Gastrocnemius medialis (tissue), 4 donors: ENCODE measurements at regions of chr16 and their contacts with region 1.

Region 1: DNA sequence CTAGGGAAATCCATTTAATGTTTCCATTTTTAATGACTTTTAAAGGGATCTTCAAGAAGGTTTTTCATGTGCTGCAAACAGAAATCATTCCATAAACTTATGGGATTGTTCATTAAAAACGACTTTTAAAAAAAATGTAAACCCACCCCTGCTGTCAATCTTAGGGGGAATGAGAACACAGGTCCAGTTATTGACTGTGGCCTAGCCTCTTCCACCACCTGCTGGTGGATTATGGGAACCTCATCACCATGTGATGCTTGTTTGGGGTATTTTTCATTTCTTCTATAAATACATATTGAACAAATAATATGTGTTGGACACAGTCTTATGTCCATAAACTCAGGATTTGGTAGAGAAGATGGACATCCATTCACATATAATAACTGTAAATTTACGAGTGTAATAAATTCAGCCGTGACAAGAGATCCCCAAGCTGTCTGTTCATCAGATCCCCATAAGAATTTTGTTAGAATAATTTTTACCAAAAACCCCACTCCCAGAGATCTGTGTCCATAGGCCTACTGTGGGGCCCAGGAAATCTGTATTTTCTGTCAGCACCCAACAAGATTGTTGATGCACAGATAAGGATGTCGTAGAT is 42.0 kb upstream of the TMC5 start:
- DNase-seq: no peak
- ATAC-seq: peak; percentile 51 to 56
- H3K4me3 ChIP-seq: no peak overlapping the region
- H3K27ac ChIP-seq: no peak overlapping the region
- H3K4me1 ChIP-seq: no peaks in the 10 kb centered on the region
- H3K27me3 ChIP-seq: no peaks in the 10 kb centered on the region
- CTCF ChIP-seq: peak; percentile 67 to 81 (median 76)
- POLR2A ChIP-seq: no peak

Region 2: DNA sequence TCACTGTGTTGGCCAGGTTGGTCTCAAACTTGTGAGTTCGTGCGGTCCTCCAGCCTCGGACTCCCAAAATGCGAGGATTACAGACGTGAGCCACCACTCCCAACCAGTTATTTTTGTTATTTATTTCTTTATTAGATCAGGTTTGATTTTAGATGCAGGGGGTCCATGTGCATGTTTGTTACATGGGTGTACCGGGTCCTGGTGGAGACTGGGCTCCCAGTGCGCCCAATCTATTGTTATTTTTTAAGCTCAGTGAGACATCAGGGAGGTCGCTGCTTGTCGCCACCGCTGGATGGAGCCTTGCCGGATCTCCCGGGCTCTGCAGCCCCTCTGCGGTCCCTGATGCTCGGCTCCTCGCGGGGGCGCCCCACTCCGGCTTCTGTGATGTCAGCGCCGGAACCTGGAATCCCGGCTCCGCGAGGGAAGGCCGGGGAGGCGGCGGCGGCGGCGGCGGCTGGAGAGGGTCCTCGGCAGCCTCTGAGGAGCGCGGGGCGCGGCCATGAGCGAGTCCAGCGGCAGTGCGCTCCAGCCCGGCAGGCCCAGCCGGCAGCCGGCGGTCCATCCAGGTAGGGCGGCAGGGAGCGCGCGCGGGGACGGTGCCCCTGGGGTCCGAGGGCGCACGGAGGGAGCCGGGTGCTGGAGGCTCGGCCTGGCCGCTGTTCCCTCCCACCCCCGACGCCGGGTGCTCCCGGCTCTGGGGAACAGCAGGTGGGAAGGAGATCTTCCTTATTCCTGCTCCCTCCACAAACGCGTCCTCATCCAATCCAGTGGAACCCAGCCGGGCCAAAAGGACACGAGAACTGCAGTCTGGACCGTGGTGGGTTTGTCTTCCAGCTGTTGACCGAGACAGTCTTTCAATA is 391.9 kb before region 1 on chr16 and contains the start of gene TMC7:
- in situ Hi-C with region 1: no loop called
- intact Hi-C with region 1: loop called (anchors 5 kb)
- DNase-seq: peak; percentile 24 to 44
- ATAC-seq: peak; percentile 68 to 76
- H3K4me3 ChIP-seq: peak within 1 kb of the TSS; percentile 50 to 59 (median 55)
- H3K27ac ChIP-seq: peak within 1 kb of the TSS; percentile 44 to 61 (median 49)
- H3K4me1 ChIP-seq: no peaks in the 10 kb centered on the region
- H3K27me3 ChIP-seq: peaks cover 0 to 3% (median 0%) of the 10 kb centered on the region in 3 donors
- CTCF ChIP-seq: peak; percentile 40 to 66 (median 58)
- POLR2A ChIP-seq: no peak
- total RNA-seq, gene TMC7: 0.31 to 0.72 (median 0.64) TPM in 3 of 4 donors, not detected in the other

Region 3: DNA sequence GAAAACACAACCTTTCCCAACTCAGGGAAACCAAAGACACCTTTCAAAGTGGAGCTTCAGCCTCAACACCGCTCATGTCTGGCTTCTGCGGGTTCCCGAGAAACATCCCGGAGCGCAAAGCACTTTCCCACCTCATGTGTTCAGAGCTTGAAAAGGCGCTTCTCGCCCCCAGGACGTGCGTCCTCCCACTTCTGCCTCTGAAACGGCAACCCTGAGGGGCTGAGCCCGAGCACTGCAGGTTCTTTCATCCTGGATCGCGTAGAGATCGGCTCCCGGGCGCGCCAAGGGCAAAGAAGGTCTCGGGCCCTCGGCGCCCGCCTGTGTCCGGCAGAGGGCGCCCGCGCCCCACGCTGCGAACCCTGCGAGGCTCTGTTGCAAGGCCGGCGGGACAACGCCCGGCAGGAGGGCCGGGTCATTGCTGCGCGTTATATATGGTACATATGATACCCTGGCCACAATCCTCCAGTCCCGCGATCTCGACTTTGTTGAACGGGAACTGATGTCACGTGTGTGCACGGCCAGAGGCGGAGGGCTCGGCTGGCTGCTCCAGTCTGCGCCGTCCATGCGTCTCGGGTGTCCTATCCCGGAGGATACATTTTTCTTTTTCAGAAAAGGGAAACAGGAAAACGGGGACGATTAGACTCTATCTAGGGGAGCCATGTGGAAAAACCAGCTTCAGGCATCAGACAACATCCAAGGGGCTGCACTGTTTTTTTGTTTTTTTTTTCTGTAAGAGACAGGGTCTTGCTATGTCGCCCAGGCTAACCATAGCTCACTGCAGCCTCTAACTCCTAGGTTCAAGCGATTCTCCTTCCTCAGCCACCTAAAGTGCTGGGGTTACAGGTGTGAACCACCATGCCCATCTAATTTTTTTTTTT is 289.1 kb before region 1 on chr16:
- in situ Hi-C with region 1: loop called (anchors 5 kb)
- intact Hi-C with region 1: loop called (anchors 1 kb)
- DNase-seq: peak; percentile 39 to 75
- ATAC-seq: peak; percentile 92 to 95
- H3K4me3 ChIP-seq: peak overlapping the region; percentile 32 to 61 (median 46)
- H3K27ac ChIP-seq: peak overlapping the region in 1 of 4 donors; percentile 4
- H3K4me1 ChIP-seq: peaks cover 7 to 8% of the 10 kb centered on the region in 2 donors
- H3K27me3 ChIP-seq: no peaks in the 10 kb centered on the region
- CTCF ChIP-seq: peak; percentile 96 to 100 (median 99)
- POLR2A ChIP-seq: no peak

Region 4: GRCh38 chr16:19094541-19095365 is 280.9 kb before region 1 on chr16:
- in situ Hi-C with region 1: loop called in 3 of 4 experiments (anchors 5 kb)
- intact Hi-C with region 1: no loop called
- DNase-seq: no peak
- ATAC-seq: no peak
- H3K4me3 ChIP-seq: no peak overlapping the region
- H3K27ac ChIP-seq: no peak overlapping the region
- H3K4me1 ChIP-seq: no peaks in the 10 kb centered on the region
- H3K27me3 ChIP-seq: no peaks in the 10 kb centered on the region
- CTCF ChIP-seq: no peak
- POLR2A ChIP-seq: no peak

Region 5: GRCh38 chr16:19167710-19168370 is 207.8 kb before region 1 on chr16 and contains the start of gene SYT17:
- in situ Hi-C with region 1: loop called in 1 of 4 experiments (anchors 10 kb)
- intact Hi-C with region 1: loop called (anchors 5 kb)
- DNase-seq: peak; percentile 18 to 21
- ATAC-seq: peak; percentile 51 to 65
- H3K4me3 ChIP-seq: peak within 1 kb of the TSS; percentile 39 to 52 (median 46)
- H3K27ac ChIP-seq: no peak within 1 kb of the TSS
- H3K4me1 ChIP-seq: peaks cover 0 to 13% of the 10 kb centered on the region in 2 donors
- H3K27me3 ChIP-seq: peaks cover 7 to 20% (median 12%) of the 10 kb centered on the region in 3 donors
- CTCF ChIP-seq: peak; percentile 28 to 65 (median 51)
- POLR2A ChIP-seq: no peak
- total RNA-seq, gene SYT17: 0.10 to 0.87 (median 0.18) TPM

Region 6: DNA sequence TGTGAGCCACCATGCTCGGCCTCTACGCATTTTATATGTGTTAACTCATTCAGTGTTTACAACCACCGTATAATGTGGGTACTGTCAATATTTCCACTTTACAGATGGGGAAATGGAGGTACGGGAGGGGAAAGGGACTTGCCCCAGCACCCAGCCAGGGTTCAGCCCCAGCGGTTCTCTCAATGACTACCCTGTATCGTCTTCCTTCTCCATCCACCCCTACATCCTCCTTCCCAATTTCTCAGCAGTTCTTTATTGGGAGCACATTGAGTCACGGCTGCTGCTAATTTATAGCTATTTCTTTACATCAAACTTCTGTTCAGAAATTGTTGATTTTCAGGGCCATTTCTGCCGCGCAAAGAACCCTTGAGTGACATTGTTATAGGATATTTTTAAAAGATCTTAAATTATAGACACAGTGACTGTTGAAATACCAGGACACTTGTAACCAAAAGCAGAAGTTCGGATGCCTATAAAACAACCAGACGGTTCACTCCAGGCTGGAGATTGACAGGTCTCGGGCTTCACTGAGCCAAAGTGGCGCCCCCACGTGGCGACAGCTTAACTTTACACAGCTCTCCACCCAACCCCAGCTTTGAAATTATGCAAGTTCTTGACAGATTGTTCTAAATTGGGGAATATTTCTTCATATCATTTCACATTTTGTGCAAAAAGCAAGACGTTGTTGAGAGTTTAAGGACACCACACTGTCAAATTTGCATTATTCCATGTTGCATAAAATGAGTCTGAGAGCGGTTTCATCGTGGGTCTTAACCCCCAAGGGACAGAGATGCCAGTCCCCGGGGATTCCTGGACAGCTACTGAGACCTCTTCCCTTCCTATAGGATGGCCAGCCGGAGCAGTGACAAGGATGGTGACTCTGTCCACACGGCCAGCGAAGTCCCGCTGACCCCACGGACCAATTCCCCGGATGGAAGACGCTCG is 195.8 kb before region 1 on chr16:
- in situ Hi-C with region 1: loop called in 1 of 4 experiments (anchors 10 kb)
- intact Hi-C with region 1: no loop called
- DNase-seq: peak; percentile 13 to 50
- ATAC-seq: peak in 1 of 2 donors; percentile 70
- H3K4me3 ChIP-seq: no peak overlapping the region
- H3K27ac ChIP-seq: no peak overlapping the region
- H3K4me1 ChIP-seq: no peaks in the 10 kb centered on the region
- H3K27me3 ChIP-seq: no peaks in the 10 kb centered on the region
- CTCF ChIP-seq: peak; percentile 20 to 63 (median 57)
- POLR2A ChIP-seq: no peak